ENCODE measurements at regions of chr17 and their contacts with region 1.

Region 1: GRCh38 chr17:39235555-39236449 is 10.1 kb upstream of the STAC2 start:
- DNase-seq: peak in 2 of 4 donors; percentile 18 to 22
- ATAC-seq: peak; percentile 59
- H3K4me3 ChIP-seq: no peak overlapping the region
- H3K27ac ChIP-seq: no peak overlapping the region
- H3K4me1 ChIP-seq: peaks cover 9% of the 10 kb centered on the region
- H3K27me3 ChIP-seq: peaks cover 0 to 12% of the 10 kb centered on the region in 2 donors
- CTCF ChIP-seq: peak in 6 of 7 experiments; percentile 22 to 58 (median 32)
- POLR2A ChIP-seq: no peak

Region 2: GRCh38 chr17:38982858-38983746 is 252.7 kb before region 1 on chr17:
- intact Hi-C with region 1: loop called (anchors 10 kb)
- DNase-seq: peak; percentile 41 to 67 (median 56)
- ATAC-seq: peak; percentile 62
- H3K4me3 ChIP-seq: no peak overlapping the region
- H3K27ac ChIP-seq: no peak overlapping the region
- H3K4me1 ChIP-seq: no peaks in the 10 kb centered on the region
- H3K27me3 ChIP-seq: no peaks in the 10 kb centered on the region
- CTCF ChIP-seq: peak; percentile 51 to 82 (median 78)
- POLR2A ChIP-seq: no peak

Region 3: DNA sequence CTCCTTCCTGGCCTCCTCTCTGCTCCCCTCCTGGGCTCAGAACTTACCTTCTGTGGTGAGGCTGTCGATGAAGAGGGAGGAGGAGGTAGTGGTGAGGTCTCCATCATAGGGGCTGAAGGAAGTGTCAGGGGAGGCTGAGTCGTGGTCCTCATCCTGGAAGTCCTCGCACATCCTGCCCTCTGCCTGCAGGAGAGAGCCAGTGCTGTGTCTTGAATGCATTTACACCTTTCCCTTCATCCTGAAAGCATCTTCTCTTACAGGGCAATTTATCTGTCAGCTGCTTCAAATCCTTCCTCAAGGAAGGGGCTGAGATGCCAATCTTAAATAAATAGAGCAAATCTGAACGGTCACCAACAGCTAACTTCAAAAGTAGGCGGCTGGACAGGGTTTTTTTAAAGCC is 157.9 kb before region 1 on chr17:
- intact Hi-C with region 1: loop called (anchors 10 kb)
- DNase-seq: no peak
- ATAC-seq: no peak
- H3K4me3 ChIP-seq: no peak overlapping the region
- H3K27ac ChIP-seq: no peak overlapping the region
- H3K4me1 ChIP-seq: no peaks in the 10 kb centered on the region
- H3K27me3 ChIP-seq: no peaks in the 10 kb centered on the region
- CTCF ChIP-seq: no peak
- POLR2A ChIP-seq: no peak

Region 4: GRCh38 chr17:39164675-39165143 is 71.1 kb before region 1 on chr17:
- intact Hi-C with region 1: loop called (anchors 10 kb)
- DNase-seq: peak; percentile 89 to 94 (median 91)
- ATAC-seq: peak; percentile 84
- H3K4me3 ChIP-seq: no peak overlapping the region
- H3K27ac ChIP-seq: peak overlapping the region; percentile 36 to 81 (median 75)
- H3K4me1 ChIP-seq: peaks cover 37% of the 10 kb centered on the region
- H3K27me3 ChIP-seq: no peaks in the 10 kb centered on the region
- CTCF ChIP-seq: peak; percentile 66 to 94 (median 85)
- POLR2A ChIP-seq: peak in 2 of 3 donors; percentile 12 to 22

Region 5: DNA sequence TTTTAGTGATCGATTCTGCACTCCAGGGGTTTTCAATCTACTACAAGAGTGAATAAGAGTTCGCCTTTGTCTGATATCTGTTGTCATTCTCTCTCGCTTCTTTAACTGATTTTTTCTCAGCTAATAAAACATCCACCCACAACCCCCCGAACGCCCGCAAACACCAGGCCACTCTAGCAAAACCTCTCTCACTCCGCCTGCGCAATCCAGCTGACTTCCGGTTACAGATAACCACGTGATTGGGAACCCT is 36.1 kb before region 1 on chr17:
- intact Hi-C with region 1: no loop called
- DNase-seq: peak; percentile 88 to 96 (median 93)
- ATAC-seq: peak; percentile 91
- H3K4me3 ChIP-seq: no peak overlapping the region
- H3K27ac ChIP-seq: peak overlapping the region; percentile 91 to 99 (median 98)
- H3K4me1 ChIP-seq: peaks cover 39% of the 10 kb centered on the region
- H3K27me3 ChIP-seq: no peaks in the 10 kb centered on the region
- CTCF ChIP-seq: no peak
- POLR2A ChIP-seq: no peak